ENCODE measurements at regions of chr19 and their contacts with region 1.

Region 1: DNA sequence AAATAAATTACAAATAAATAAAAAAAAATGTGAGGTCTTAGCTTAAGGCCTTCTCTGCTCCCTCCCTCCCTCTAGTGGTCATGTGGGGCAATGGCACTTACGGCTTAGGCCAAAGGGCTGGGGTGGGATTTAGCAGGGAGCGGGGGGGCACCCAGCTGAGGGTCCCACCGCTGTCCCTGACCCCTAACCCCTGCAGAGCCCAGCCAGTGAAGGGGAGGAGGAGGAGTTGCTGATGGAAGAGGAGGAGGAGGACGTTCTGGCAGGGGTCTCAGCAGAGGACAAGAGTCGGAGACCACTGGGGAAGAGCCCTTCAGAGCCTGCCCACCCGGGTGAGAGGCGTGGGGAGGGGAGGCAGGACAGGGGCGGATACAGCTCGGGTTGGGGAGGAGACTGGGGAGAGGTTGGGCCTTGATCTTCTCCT is 9.3 kb downstream of the MPND start:
- H3K4me3 ChIP-seq: no peak overlapping the region
- H3K27ac ChIP-seq: no peak overlapping the region
- H3K4me1 ChIP-seq: no peaks in the 10 kb centered on the region
- CTCF ChIP-seq: peak; percentile 52; the same call in 1 of the 2 replicates

Region 2: DNA sequence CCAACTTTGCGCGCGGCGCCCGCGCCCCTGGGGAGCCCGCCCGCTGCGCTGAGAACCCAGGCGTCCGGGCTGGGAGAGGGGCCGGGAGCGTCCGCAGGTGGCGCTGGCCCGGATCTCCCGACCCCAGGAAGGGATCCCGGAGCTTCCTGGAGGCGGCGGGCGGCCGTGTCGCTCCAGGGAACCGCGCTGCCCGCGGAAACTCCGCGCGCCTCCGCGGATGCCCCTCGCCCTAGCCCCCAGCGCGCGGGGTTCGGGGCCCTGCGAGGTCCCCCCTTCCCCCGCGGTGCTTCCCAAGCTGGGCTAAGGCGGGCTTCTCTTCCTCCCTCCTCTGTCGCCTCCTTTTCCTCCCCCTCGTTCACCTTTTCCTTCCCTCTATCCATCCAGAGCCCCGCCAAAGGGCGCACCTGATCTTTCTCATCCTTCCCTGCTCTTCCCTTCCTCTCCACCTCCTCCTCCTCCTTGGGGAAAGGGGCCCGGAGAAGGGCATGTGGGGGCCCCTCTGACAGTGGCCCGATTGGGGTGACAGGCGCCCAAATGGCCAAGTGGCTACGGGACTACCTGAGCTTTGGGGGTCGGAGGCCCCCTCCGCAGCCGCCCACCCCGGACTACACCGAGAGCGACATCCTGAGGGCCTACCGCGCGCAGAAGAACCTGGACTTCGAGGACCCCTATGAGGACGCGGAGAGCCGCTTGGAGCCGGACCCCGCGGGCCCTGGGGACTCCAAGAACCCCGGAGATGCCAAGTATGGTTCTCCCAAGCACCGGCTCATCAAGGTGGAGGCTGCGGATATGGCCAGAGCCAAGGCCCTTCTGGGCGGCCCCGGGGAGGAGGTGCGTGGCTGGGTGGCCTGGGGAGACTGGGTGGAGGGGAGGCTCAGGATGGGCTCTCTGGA is 72.9 kb before region 1 on chr19:
- CTCF ChIA-PET with region 1: no interaction called
- POLR2A ChIA-PET with region 1: no interaction called
- H3K4me3 ChIP-seq: peak overlapping the region; percentile 13
- H3K27ac ChIP-seq: no peak overlapping the region
- H3K4me1 ChIP-seq: no peaks in the 10 kb centered on the region; the same call in 1 of the 2 replicates
- CTCF ChIP-seq: no peak

Region 3: GRCh38 chr19:4322942-4323665 is 29.6 kb before region 1 on chr19:
- CTCF ChIA-PET with region 1: interaction called, 12 read pairs
- POLR2A ChIA-PET with region 1: no interaction called
- H3K4me3 ChIP-seq: no peak overlapping the region
- H3K27ac ChIP-seq: no peak overlapping the region
- H3K4me1 ChIP-seq: no peaks in the 10 kb centered on the region
- CTCF ChIP-seq: no peak

Region 4: DNA sequence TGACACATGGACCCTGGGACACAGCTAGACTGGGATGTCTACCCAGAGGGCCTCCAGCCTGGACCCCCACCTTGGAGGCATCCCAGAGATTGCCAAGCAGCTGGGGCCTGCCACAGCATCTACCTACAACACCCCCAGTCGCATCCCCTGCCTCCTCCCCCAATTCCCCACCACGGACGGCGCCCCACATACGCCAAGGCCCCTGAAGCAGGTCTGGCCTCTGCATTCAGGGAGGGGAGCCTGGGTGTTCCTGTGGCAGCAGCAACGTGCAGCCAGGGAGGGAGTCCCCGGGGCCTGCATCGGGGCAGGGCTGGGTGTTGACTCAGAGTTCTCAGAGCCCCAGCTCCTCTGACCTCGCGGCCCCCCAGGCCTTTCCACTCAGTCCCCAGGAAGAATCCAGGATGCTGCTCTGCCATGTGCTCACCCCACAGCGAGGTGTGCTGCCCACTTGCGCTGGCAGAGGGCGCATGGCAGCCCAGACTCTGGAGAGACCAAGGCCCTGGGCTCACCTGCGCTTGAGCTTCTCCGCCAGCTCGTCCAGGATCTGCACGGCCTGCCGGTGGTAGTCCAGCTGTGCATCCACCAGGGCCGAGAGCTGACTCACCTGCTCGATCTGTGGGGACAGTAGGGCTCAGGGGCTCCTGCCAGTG is 10.3 kb after region 1 on chr19:
- CTCF ChIA-PET with region 1: interaction called, 19 read pairs
- POLR2A ChIA-PET with region 1: no interaction called
- H3K4me3 ChIP-seq: no peak overlapping the region
- H3K27ac ChIP-seq: no peak overlapping the region
- H3K4me1 ChIP-seq: no peaks in the 10 kb centered on the region
- CTCF ChIP-seq: peak; percentile 59

Region 5: DNA sequence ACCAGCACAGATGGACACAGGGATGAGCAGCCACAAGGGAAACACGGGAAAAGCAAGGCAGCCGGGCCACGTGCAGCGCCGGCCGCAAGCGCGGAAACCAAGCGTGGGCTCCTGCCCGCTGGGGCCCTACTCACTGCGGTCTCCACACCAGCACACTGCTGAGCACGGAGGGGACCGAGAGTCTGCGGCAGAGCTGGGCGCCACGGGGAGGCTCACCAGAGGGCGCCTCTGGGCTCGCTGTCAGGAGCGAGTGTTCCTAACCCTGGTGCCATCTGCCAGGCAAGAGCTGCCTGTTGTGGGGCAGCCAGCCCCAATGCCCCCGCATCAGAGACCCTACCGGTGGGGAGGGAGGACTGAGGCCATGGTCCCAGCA is 17.2 kb after region 1 on chr19:
- CTCF ChIA-PET with region 1: interaction called, 21 read pairs
- POLR2A ChIA-PET with region 1: no interaction called
- H3K4me3 ChIP-seq: no peak overlapping the region
- H3K27ac ChIP-seq: peak overlapping the region; percentile 24; the same call in 1 of the 2 replicates
- H3K4me1 ChIP-seq: 0 out of 2 replicates have a peak, but pooled peaks cover 5% of the 10 kb centered on the region
- CTCF ChIP-seq: peak; percentile 45

Region 6: DNA sequence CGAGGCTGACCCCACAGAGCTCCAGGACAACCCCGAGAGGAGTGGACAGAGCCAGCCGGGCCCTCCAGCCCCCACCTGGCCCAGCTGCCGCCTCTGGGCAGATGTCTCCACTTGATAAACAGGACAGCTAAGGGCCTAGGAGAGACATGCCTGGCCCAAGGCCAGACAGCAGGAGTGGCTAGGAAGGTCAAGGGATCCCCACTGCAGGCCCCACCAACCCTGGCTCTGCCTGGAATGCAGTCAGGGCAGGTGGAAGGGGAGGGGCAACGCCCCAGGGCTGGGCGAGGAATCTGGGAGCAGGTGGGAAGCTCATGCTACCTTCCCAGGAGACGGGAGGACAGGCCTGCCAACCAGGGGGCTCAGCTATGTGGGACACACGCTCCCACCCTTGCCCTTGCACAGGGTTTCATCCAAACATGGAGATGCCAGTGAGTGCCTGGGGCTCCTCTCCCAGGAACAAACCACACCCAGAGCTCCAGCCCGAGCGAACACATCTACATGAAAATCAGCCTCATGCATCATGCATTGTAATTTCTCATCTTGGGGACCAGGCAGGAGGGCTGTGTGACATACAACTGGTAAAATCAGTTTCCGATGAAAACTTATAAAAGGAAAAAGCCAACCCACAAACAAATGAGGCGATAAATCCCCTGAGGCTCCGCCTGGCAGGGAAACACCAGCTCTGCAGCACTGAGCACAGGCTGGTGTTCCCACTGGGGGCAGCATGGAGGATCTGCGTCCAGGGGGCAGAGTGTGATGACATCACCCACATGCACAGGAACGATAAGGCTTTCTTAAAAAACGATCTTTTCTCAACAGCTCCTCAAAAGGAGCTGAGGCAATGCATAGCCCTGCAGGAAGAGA is 22.7 kb after region 1 on chr19:
- CTCF ChIA-PET with region 1: interaction called, 21 read pairs
- POLR2A ChIA-PET with region 1: interaction called, 3 read pairs
- H3K4me3 ChIP-seq: no peak overlapping the region
- H3K27ac ChIP-seq: no peak overlapping the region; the same call in 1 of the 2 replicates
- H3K4me1 ChIP-seq: peaks cover 9% of the 10 kb centered on the region
- CTCF ChIP-seq: peak; percentile 88

Region 7: DNA sequence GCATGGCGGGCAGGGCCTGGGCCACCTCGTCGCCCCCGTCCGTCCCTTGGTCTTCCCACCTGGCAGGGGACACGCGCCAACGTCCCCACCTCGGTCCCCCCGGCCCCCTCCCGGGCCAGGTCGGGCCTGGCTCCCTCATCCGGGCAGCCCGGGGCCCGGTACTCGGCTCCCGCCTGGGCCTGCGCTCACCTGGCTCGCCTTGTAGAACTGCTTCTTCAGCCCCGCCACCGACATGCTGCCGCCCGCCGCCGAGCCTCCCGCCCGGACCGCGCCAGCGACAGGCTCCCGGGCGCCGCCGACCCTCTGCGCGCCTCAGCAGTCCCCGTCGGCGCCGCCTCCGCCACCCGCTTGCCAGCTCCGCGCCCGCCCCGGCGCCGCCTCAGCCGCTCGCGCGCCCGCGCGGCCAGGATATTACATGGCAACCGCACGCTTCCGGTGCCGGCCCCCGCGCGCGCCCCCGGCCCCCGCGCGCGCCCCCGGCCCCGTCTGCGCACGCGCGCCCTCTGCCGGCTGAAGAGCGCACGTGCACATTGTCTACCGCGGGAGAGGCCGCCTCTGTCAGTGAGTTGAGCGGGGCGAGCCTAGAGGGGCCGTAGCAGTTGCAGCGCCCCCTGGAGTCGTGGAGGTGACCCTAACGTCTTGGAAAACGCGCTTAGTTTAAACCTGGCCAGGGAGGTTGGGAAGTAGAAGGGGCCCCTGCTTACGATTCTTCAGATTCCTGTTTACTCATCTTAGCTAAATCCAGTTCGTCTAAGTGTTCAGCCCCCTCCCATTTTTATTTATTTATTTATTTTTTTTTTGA is 47.6 kb after region 1 on chr19 and contains the start of gene SH3GL1:
- CTCF ChIA-PET with region 1: interaction called, 10 read pairs
- POLR2A ChIA-PET with region 1: interaction called, 5 read pairs
- H3K4me3 ChIP-seq: peak within 1 kb of the TSS; percentile 95
- H3K27ac ChIP-seq: peak within 1 kb of the TSS; percentile 84
- H3K4me1 ChIP-seq: no peaks in the 10 kb centered on the region
- CTCF ChIP-seq: peak; percentile 98

Measured in HEK293 (cell line).